ENCODE measurements at regions of chr4 and their contacts with region 1.

Region 1: DNA sequence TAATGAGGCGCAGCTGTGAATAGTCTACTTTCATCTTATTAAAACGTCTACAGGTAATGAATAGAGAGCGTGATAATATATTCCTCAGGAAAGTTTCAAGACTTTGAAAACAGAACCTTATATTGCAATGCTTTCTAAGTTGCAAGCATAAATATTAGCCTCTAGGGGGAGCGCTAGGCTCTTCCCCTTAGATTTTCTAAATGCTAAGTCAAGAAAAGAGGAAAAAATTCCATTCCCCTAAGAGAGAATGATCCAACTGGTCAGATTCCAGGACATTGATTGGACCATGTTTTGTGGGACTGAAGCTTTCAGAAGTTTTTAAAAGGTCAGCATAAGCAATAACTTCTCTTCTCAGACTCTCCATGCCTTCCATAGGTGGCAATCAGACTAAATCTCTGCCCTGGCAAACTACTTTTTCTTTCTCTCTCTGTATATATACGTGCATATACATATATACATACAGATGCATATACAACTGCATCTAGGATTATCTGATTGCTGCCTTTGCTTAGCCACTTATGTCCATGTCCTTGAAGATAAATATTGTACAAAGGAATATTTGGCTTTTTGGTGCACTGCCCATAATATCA is 492.9 kb downstream of the INPP4B start:
- DNase-seq: no peak
- ATAC-seq: no peak

Region 2: GRCh38 chr4:142120921-142121320 is 232.3 kb before region 1 on chr4:
- intact Hi-C with region 1: loop called (anchors 5 kb)
- DNase-seq: no peak
- ATAC-seq: no peak

Measured in Right ventricle myocardium inferior (tissue), 1 donor.